Calu3 (cell line): ENCODE measurements at regions of chr2 and their contacts with region 1.

Region 1: GRCh38 chr2:38465789-38466127 is 88.7 kb upstream of the ATL2 start:
- DNase-seq: peak; percentile 63
- H3K4me3 Mint-ChIP-seq: no peak overlapping the region
- H3K27ac Mint-ChIP-seq: peak overlapping the region; percentile 12
- H3K4me1 Mint-ChIP-seq: peaks cover 24% of the 10 kb centered on the region
- H3K27me3 Mint-ChIP-seq: no peaks in the 10 kb centered on the region
- CTCF ChIP-seq: peak; percentile 73

Region 2: DNA sequence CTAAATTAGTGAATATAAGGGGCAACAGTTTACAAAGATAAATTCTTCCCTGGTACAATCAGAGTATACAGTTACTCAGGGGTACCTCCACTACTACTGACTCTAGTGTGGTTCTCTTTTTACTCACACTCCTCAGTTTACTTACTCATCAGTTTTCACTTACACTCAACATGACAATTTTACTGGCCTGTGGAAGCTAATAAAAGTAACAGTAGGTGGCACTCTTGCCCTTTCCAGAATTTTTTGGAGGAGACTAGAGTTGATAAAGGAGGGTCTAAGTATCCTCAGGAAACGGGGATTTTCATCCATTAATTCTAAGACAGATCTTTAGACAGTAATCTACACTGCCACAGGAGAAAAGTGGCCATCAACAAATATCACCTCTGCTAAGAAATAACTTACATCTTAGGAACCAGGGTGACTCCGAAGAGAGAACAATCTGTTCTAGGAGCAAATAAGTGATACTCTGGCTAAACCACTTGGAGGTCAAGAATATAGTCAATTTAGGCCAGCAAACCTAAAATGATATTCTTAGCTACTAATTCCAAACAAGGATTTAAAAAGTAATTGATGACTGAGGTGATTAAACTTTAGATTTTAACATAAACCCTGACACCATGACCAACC is 149.9 kb before region 1 on chr2:
- CTCF ChIA-PET with region 1: interaction called, 10 read pairs
- intact Hi-C with region 1: loop called (anchors 10 kb)
- DNase-seq: peak; percentile 47
- H3K4me3 Mint-ChIP-seq: no peak overlapping the region
- H3K27ac Mint-ChIP-seq: no peak overlapping the region
- H3K4me1 Mint-ChIP-seq: no peaks in the 10 kb centered on the region
- H3K27me3 Mint-ChIP-seq: no peaks in the 10 kb centered on the region
- CTCF ChIP-seq: peak; percentile 41

Region 3: GRCh38 chr2:38323623-38324022 is 142.1 kb before region 1 on chr2:
- CTCF ChIA-PET with region 1: interaction called, 5 read pairs
- intact Hi-C with region 1: loop called (anchors 10 kb)
- DNase-seq: no peak
- H3K4me3 Mint-ChIP-seq: no peak overlapping the region
- H3K27ac Mint-ChIP-seq: no peak overlapping the region
- H3K4me1 Mint-ChIP-seq: peaks cover 44% of the 10 kb centered on the region
- H3K27me3 Mint-ChIP-seq: no peaks in the 10 kb centered on the region
- CTCF ChIP-seq: no peak

Region 4: GRCh38 chr2:38377050-38377828 is 88.5 kb before region 1 on chr2 and contains the start of gene ATL2:
- CTCF ChIA-PET with region 1: interaction called, 38 read pairs
- intact Hi-C with region 1: loop called (anchors 1 kb)
- DNase-seq: peak; percentile 94
- H3K4me3 Mint-ChIP-seq: peak within 1 kb of the TSS; percentile 73
- H3K27ac Mint-ChIP-seq: peak within 1 kb of the TSS; percentile 85
- H3K4me1 Mint-ChIP-seq: peaks cover 19% of the 10 kb centered on the region
- H3K27me3 Mint-ChIP-seq: no peaks in the 10 kb centered on the region
- CTCF ChIP-seq: peak; percentile 12
- total RNA-seq, gene ATL2: 118 and 129 TPM in 2 replicates

Region 5: DNA sequence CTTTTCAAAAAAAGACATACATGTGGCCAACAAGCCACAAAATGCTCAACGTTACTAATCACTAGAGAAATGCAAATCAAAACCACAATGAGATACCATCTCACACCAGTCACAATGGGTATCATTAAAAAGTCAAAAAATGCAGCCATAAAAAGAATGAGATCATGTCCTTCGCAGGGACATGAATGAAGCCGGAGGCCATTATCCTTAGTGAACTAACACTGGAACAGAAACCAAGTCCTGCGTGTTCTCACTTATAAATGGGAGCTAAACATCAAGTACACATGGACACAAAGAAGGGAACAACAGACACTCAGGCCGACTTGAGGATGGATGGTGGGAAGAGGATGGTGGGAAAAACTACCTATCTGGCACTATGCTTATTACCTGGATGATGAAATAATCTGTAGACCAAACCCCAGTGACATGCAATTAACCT is 70.8 kb before region 1 on chr2:
- CTCF ChIA-PET with region 1: interaction called, 10 read pairs
- intact Hi-C with region 1: no loop called
- DNase-seq: no peak
- H3K4me3 Mint-ChIP-seq: no peak overlapping the region
- H3K27ac Mint-ChIP-seq: peak overlapping the region; percentile 89
- H3K4me1 Mint-ChIP-seq: peaks cover 29% of the 10 kb centered on the region
- H3K27me3 Mint-ChIP-seq: no peaks in the 10 kb centered on the region
- CTCF ChIP-seq: no peak

Region 6: GRCh38 chr2:38438883-38439612 is 26.7 kb before region 1 on chr2:
- CTCF ChIA-PET with region 1: interaction called, 18 read pairs
- intact Hi-C with region 1: loop called (anchors 1 kb)
- DNase-seq: peak; percentile 84
- H3K4me3 Mint-ChIP-seq: peak overlapping the region; percentile 34
- H3K27ac Mint-ChIP-seq: peak overlapping the region; percentile 95
- H3K4me1 Mint-ChIP-seq: peaks cover 76% of the 10 kb centered on the region
- H3K27me3 Mint-ChIP-seq: no peaks in the 10 kb centered on the region
- CTCF ChIP-seq: no peak

Region 7: DNA sequence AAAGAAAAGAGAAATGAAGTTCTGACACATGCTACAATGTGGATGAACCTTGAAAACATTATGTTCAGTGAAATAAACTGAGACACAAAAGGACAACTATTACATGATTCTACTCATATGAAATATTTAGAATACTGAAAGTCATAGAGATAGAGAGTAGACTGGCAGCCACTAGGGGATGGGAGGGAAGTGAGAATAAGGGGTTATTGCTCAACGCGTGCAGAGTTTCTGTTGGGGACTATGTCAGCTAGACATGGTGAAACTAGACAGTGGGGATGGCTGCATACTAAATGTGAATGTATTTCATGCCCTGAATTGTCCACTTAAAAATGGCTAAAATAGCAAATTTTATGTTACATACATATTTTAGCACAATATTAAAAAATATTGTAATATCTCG is 20.0 kb after region 1 on chr2:
- CTCF ChIA-PET with region 1: no interaction called
- intact Hi-C with region 1: no loop called
- DNase-seq: no peak
- H3K4me3 Mint-ChIP-seq: no peak overlapping the region
- H3K27ac Mint-ChIP-seq: no peak overlapping the region
- H3K4me1 Mint-ChIP-seq: no peaks in the 10 kb centered on the region
- H3K27me3 Mint-ChIP-seq: no peaks in the 10 kb centered on the region
- CTCF ChIP-seq: no peak

Region 8: GRCh38 chr2:38554973-38555595 is 89.3 kb after region 1 on chr2:
- CTCF ChIA-PET with region 1: no interaction called
- intact Hi-C with region 1: no loop called
- DNase-seq: no peak
- H3K4me3 Mint-ChIP-seq: no peak overlapping the region
- H3K27ac Mint-ChIP-seq: no peak overlapping the region
- H3K4me1 Mint-ChIP-seq: no peaks in the 10 kb centered on the region
- H3K27me3 Mint-ChIP-seq: no peaks in the 10 kb centered on the region
- CTCF ChIP-seq: peak; percentile 33